Calu3 (cell line): ENCODE measurements at regions of chr6 and their contacts with region 1.

Region 1: GRCh38 chr6:135535989-135536414 is 38.5 kb upstream of the AHI1 start:
- DNase-seq: peak; percentile 8
- H3K4me3 Mint-ChIP-seq: no peak overlapping the region
- H3K27ac Mint-ChIP-seq: no peak overlapping the region
- H3K4me1 Mint-ChIP-seq: no peaks in the 10 kb centered on the region
- H3K27me3 Mint-ChIP-seq: no peaks in the 10 kb centered on the region
- CTCF ChIP-seq: no peak

Region 2: DNA sequence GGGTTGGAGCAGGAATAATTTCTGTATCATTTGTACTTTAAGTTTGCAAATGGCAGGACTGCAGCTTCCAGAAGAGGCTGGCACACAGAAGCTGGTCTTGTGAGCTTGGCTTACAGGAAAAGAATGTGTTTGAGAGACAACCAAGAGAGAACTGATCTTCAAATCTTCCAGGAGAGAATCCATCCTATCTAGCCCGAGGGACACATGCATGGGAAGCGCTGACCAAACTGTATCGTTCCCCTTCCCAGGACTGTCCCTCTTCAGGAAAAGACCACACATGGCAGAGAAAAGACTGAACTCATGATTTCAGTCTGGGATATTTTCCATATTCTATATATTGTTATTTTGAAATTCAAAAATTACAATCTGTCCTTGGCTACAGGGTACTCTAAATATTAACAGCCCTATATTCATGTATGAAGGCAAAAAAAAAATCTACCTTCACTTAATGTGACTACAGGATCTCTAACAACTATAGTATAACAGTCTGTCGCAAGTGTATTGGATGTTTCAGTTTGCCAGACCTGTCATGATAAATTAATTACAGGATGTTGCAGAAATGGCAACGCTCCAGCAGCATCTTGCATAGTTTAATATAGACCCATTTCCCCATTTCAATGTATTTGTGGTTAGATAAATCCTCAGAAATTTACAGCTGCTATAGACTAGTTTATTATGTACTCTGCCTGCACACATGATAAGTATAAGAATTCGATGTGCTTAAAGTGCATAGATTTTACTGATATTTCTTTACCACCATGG is 255.4 kb before region 1 on chr6:
- CTCF ChIA-PET with region 1: no interaction called
- intact Hi-C with region 1: loop called (anchors 5 kb)
- DNase-seq: no peak
- H3K4me3 Mint-ChIP-seq: no peak overlapping the region
- H3K27ac Mint-ChIP-seq: no peak overlapping the region
- H3K4me1 Mint-ChIP-seq: no peaks in the 10 kb centered on the region
- H3K27me3 Mint-ChIP-seq: no peaks in the 10 kb centered on the region
- CTCF ChIP-seq: no peak

Region 3: GRCh38 chr6:135667691-135668455 is 131.9 kb after region 1 on chr6:
- CTCF ChIA-PET with region 1: no interaction called
- intact Hi-C with region 1: loop called (anchors 10 kb)
- DNase-seq: peak; percentile 1
- H3K4me3 Mint-ChIP-seq: no peak overlapping the region
- H3K27ac Mint-ChIP-seq: no peak overlapping the region
- H3K4me1 Mint-ChIP-seq: peaks cover 10% of the 10 kb centered on the region
- H3K27me3 Mint-ChIP-seq: no peaks in the 10 kb centered on the region
- CTCF ChIP-seq: no peak

Region 4: GRCh38 chr6:135759831-135760230 is 223.8 kb after region 1 on chr6:
- CTCF ChIA-PET with region 1: no interaction called
- intact Hi-C with region 1: loop called (anchors 5 kb)
- DNase-seq: peak; percentile 26
- H3K4me3 Mint-ChIP-seq: no peak overlapping the region
- H3K27ac Mint-ChIP-seq: no peak overlapping the region
- H3K4me1 Mint-ChIP-seq: no peaks in the 10 kb centered on the region
- H3K27me3 Mint-ChIP-seq: no peaks in the 10 kb centered on the region
- CTCF ChIP-seq: peak; percentile 22

Region 5: DNA sequence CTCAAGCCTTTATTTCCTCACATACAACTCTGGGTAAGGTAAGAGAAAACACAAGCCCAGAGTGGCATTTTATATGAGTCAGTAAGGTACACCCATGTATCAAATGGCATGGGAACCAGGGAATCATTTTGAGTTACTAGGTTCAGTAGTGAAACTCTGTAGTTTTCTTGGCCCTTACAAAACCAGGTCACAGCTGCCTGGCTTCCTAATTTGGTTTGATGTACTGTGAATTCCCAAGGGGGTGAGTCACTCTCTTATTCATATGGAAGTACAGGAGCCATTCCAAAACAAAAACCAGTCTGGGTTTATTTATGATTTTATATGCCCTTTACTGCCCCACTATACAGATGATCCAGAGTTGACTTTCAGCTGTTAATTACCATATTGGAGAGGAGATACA is 386.2 kb after region 1 on chr6:
- CTCF ChIA-PET with region 1: no interaction called
- intact Hi-C with region 1: loop called (anchors 10 kb)
- DNase-seq: peak; percentile 0
- H3K4me3 Mint-ChIP-seq: no peak overlapping the region
- H3K27ac Mint-ChIP-seq: no peak overlapping the region
- H3K4me1 Mint-ChIP-seq: peaks cover 8% of the 10 kb centered on the region
- H3K27me3 Mint-ChIP-seq: no peaks in the 10 kb centered on the region
- CTCF ChIP-seq: no peak

Region 6: GRCh38 chr6:136886130-136886529 is 1350.1 kb after region 1 on chr6:
- CTCF ChIA-PET with region 1: no interaction called
- intact Hi-C with region 1: no loop called
- DNase-seq: no peak
- H3K4me3 Mint-ChIP-seq: no peak overlapping the region
- H3K27ac Mint-ChIP-seq: no peak overlapping the region
- H3K4me1 Mint-ChIP-seq: no peaks in the 10 kb centered on the region
- H3K27me3 Mint-ChIP-seq: no peaks in the 10 kb centered on the region
- CTCF ChIP-seq: no peak